ENCODE measurements at regions of chr20 and their contacts with region 1.

Region 1: GRCh38 chr20:740141-740540 is 28.2 kb downstream of the SLC52A3 start:
- DNase-seq: no peak
- H3K4me3 Mint-ChIP-seq: no peak overlapping the region
- H3K27ac Mint-ChIP-seq: no peak overlapping the region
- H3K4me1 Mint-ChIP-seq: no peaks in the 10 kb centered on the region
- H3K27me3 Mint-ChIP-seq: peaks cover 13% of the 10 kb centered on the region
- CTCF ChIP-seq: no peak

Region 2: DNA sequence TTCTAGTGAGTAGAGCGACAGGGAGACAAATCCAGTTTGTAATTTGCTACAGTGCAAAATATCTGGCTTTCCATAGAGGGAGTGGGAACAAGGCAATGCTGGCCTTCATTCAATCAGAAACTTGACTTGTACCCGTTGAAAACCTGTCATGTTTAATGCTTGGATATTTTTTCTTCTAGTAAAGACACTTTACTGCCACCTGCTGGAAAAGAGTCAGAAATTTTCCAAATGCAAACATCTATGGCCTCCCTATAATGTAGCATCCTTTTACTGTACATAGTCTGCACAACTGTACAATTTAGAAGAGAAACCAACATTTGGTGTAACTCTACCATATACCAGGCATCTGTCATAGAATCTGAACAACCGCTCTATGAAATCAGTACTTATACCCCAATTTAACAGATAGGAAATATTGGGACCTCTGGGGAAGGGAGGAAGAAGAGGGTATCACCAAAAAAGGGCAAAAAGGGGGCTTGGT is 261.2 kb before region 1 on chr20:
- CTCF ChIA-PET with region 1: interaction called, 24 read pairs
- POLR2A ChIA-PET with region 1: no interaction called
- intact Hi-C with region 1: no loop called
- DNase-seq: peak; percentile 71
- H3K4me3 Mint-ChIP-seq: no peak overlapping the region
- H3K27ac Mint-ChIP-seq: no peak overlapping the region
- H3K4me1 Mint-ChIP-seq: peaks cover 11% of the 10 kb centered on the region
- H3K27me3 Mint-ChIP-seq: no peaks in the 10 kb centered on the region
- CTCF ChIP-seq: peak; percentile 51

Region 3: DNA sequence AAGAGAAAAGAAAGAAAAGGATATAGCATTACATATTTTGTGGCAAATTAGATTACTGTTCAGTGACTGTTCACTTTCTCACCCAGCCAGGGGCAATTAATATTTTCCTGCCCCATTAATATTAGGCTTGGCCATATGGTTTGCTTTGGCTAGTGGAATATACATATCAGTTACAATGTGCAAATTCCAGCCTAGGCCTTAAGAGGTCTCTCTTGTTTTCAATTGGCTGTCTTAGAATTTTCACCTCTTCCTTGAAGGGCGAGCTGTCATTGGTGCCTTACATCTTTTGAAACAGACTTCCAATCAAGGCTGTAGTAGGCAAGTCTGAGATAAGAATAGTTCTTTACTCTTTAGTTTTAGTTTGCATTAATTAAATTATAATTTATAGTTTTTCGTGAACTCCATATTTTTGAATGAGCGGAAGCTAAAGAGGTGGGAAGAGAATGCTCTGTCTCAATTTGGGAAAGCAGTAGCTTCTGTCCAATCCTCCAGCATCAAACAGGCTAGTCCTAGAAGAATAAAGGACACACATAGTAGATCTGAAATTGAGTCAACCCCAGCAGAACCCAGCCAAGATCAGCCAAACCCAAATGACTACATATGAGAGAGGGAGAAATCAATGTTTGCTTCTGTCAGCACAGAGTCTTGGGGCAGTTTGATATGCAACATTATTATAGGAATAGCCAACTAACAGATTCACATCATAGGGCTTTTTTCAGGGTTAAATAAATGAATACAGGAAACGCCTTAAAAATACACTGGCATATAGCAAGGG is 190.2 kb before region 1 on chr20:
- CTCF ChIA-PET with region 1: interaction called, 13 read pairs
- POLR2A ChIA-PET with region 1: no interaction called
- intact Hi-C with region 1: no loop called
- DNase-seq: no peak
- H3K4me3 Mint-ChIP-seq: no peak overlapping the region
- H3K27ac Mint-ChIP-seq: no peak overlapping the region
- H3K4me1 Mint-ChIP-seq: peaks cover 4% of the 10 kb centered on the region
- H3K27me3 Mint-ChIP-seq: peaks cover 32% of the 10 kb centered on the region
- CTCF ChIP-seq: no peak

Region 4: GRCh38 chr20:571754-572441 is 168.2 kb before region 1 on chr20:
- CTCF ChIA-PET with region 1: interaction called, 10 read pairs
- POLR2A ChIA-PET with region 1: no interaction called
- intact Hi-C with region 1: no loop called
- DNase-seq: no peak
- H3K4me3 Mint-ChIP-seq: no peak overlapping the region
- H3K27ac Mint-ChIP-seq: no peak overlapping the region
- H3K4me1 Mint-ChIP-seq: peaks cover 12% of the 10 kb centered on the region
- H3K27me3 Mint-ChIP-seq: peaks cover 59% of the 10 kb centered on the region
- CTCF ChIP-seq: no peak

Region 5: DNA sequence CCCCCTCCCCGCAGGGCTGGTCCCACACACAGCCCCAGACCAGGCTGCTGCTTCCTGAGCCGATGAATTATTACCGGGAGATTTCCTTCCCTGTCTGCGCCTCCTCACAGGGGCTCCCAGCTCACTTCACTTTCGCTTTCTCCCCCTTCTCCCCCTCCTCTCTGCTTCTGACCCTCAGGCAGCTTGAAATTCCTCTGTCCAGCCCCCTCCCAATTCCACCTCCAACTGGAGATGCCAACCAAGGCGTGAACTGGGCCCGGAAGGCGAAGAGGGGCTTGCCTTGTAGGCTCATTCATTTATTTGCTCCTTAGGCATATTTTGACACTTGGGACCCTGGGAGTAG is 128.3 kb before region 1 on chr20:
- CTCF ChIA-PET with region 1: no interaction called
- POLR2A ChIA-PET with region 1: no interaction called
- intact Hi-C with region 1: no loop called
- DNase-seq: no peak
- H3K4me3 Mint-ChIP-seq: no peak overlapping the region
- H3K27ac Mint-ChIP-seq: no peak overlapping the region
- H3K4me1 Mint-ChIP-seq: no peaks in the 10 kb centered on the region
- H3K27me3 Mint-ChIP-seq: peaks cover 37% of the 10 kb centered on the region
- CTCF ChIP-seq: no peak

Region 6: GRCh38 chr20:667391-667964 is 72.7 kb before region 1 on chr20:
- CTCF ChIA-PET with region 1: interaction called, 15 read pairs
- POLR2A ChIA-PET with region 1: interaction called, 3 read pairs
- intact Hi-C with region 1: loop called (anchors 5 kb)
- DNase-seq: peak; percentile 55
- H3K4me3 Mint-ChIP-seq: no peak overlapping the region
- H3K27ac Mint-ChIP-seq: no peak overlapping the region
- H3K4me1 Mint-ChIP-seq: no peaks in the 10 kb centered on the region
- H3K27me3 Mint-ChIP-seq: peaks cover 41% of the 10 kb centered on the region
- CTCF ChIP-seq: peak; percentile 86

Region 7: DNA sequence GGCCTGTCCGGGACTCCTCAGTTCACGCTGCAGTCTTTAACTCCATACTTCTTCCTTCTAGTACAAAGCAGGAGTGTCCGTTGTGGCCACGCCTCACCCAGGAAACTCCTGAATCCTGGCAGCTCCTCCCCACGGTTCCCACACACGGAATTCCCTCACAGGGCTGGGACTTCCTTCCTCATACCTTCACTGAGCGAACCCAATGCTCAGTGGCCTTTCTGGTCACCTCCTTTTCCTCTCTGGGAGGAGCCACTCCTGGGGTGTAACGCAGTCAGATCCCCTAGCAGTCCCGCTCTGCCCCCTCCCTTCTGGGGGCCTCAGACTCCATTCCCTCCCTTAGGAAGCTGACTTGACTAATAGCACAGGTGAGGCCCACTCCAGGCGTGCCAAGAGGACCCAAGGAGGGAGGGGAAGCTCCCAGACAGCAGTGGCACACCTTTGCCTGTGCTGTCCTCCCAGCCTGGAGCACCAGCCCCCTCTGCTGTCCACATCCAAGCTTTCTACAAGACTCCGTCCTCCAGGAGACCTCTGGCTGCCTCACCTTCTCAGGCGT is 28.4 kb after region 1 on chr20 and contains the start of gene SLC52A3:
- CTCF ChIA-PET with region 1: interaction called, 12 read pairs
- POLR2A ChIA-PET with region 1: no interaction called
- intact Hi-C with region 1: no loop called
- DNase-seq: peak; percentile 60
- H3K4me3 Mint-ChIP-seq: peak within 1 kb of the TSS; percentile 9
- H3K27ac Mint-ChIP-seq: no peak within 1 kb of the TSS
- H3K4me1 Mint-ChIP-seq: no peaks in the 10 kb centered on the region
- H3K27me3 Mint-ChIP-seq: peaks cover 15% of the 10 kb centered on the region
- CTCF ChIP-seq: no peak
- total RNA-seq, gene SLC52A3: 0.14 and 0.17 TPM in 2 replicates

Region 8: GRCh38 chr20:815914-816606 is 75.9 kb after region 1 on chr20:
- CTCF ChIA-PET with region 1: no interaction called
- POLR2A ChIA-PET with region 1: no interaction called
- intact Hi-C with region 1: no loop called
- DNase-seq: peak; percentile 72
- H3K4me3 Mint-ChIP-seq: no peak overlapping the region
- H3K27ac Mint-ChIP-seq: no peak overlapping the region
- H3K4me1 Mint-ChIP-seq: no peaks in the 10 kb centered on the region
- H3K27me3 Mint-ChIP-seq: peaks cover 31% of the 10 kb centered on the region
- CTCF ChIP-seq: peak; percentile 97

Region 9: GRCh38 chr20:884983-885952 is 145.1 kb after region 1 on chr20:
- CTCF ChIA-PET with region 1: no interaction called
- POLR2A ChIA-PET with region 1: no interaction called
- intact Hi-C with region 1: no loop called
- DNase-seq: no peak
- H3K4me3 Mint-ChIP-seq: no peak overlapping the region
- H3K27ac Mint-ChIP-seq: no peak overlapping the region
- H3K4me1 Mint-ChIP-seq: peaks cover 37% of the 10 kb centered on the region
- H3K27me3 Mint-ChIP-seq: no peaks in the 10 kb centered on the region
- CTCF ChIP-seq: no peak